OCI-LY7 (cell line): ENCODE measurements at regions of chr6 and their contacts with region 1.

Region 1: GRCh38 chr6:138907167-138907566 is 80.9 kb downstream of the REPS1 start:
- DNase-seq: no peak
- H3K4me3 ChIP-seq: no peak overlapping the region
- H3K27ac ChIP-seq: no peak overlapping the region
- H3K4me1 ChIP-seq: no peaks in the 10 kb centered on the region
- CTCF ChIP-seq: no peak

Region 2: DNA sequence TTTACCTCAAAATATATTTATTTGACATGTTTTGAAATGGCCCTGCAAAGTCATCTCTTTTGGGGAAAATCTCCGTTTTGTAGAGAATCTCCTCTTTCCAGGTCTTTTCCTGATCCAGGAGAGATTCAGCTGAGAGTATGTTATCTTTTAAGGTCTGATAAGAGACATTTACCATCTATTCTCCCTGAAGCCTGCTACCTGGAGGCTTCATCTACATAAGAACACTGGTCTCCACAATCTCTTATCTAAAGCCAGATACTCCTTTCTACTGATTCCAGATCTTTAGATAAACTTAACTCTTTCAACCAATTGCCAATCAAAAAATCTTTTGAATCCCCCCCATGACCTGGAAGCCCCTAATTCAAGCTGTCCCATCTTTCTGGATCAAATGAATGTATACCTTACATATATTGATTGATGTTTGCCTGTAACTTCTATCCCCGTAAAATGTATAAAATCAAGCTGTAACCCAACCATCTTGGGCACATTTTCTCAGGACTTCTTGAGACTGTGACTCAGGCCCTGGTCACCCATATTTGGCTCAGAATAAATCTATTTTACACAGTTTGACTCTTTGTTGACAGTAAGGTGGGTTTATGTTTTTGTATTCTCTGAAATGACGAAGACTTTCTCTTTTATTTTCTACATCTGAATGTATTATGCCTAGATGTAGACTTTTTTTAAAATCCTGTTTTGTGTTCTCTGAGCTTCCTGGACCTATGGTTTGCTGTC is 15.7 kb before region 1 on chr6:
- CTCF ChIA-PET with region 1: no interaction called
- POLR2A ChIA-PET with region 1: interaction called, 15 read pairs
- intact Hi-C with region 1: no loop called
- DNase-seq: no peak
- H3K4me3 ChIP-seq: no peak overlapping the region
- H3K27ac ChIP-seq: no peak overlapping the region
- H3K4me1 ChIP-seq: no peaks in the 10 kb centered on the region
- CTCF ChIP-seq: no peak

Region 3: DNA sequence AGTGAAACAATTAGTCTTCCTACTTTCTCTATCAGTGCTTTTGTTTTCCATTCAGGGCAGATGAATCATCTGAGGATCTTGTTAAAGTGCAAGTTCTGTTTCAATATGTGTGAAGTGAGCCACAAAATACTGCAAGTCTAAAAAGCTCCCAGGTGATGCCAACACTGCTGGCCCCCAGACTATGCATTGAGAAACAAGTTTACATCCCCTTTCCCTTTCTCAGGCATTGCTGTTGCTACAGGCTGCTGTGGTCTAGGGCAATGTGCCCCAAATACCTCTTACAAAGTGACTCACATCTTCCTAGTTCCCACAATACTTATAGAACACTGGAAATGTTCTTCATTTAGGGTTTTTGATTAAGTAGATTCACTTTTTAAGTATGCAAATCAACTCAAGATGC is 153.2 kb after region 1 on chr6:
- CTCF ChIA-PET with region 1: no interaction called
- POLR2A ChIA-PET with region 1: no interaction called
- intact Hi-C with region 1: no loop called
- DNase-seq: no peak
- H3K4me3 ChIP-seq: no peak overlapping the region
- H3K27ac ChIP-seq: no peak overlapping the region
- H3K4me1 ChIP-seq: no peaks in the 10 kb centered on the region
- CTCF ChIP-seq: no peak